Heart left ventricle (tissue), 16 donors: ENCODE measurements at regions of chr10 and their contacts with region 1.

Region 1: DNA sequence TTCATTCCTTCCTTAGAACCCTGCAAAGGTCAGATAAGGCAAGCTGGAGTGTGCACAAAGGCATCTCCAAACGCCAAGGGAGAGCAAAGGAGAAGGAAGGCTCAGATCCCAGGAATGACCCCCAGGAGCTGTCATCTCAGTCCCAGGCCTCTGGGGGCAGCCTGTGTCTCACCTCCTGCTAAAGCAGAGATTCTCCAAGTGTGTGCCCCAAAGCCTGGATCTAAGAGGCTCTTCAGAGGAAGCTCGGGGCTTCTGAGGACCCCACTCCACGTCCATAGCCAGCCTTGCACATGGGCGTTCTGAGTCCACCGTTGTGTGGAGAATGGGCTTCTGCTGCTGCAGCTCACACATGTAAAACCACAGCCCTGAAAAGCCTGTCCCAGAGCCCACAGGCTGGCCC is 5.1 kb upstream of the GRID1 start:
- DNase-seq: no peak
- ATAC-seq: no peak
- H3K4me3 ChIP-seq: no peak overlapping the region
- H3K27ac ChIP-seq: no peak overlapping the region
- H3K4me1 ChIP-seq: peaks cover 0 to 13% (median 6%) of the 10 kb centered on the region in 12 donors
- H3K27me3 ChIP-seq: peaks cover 7 to 65% (median 16%) of the 10 kb centered on the region in 9 donors
- CTCF ChIP-seq: no peak
- POLR2A ChIP-seq: no peak

Region 2: DNA sequence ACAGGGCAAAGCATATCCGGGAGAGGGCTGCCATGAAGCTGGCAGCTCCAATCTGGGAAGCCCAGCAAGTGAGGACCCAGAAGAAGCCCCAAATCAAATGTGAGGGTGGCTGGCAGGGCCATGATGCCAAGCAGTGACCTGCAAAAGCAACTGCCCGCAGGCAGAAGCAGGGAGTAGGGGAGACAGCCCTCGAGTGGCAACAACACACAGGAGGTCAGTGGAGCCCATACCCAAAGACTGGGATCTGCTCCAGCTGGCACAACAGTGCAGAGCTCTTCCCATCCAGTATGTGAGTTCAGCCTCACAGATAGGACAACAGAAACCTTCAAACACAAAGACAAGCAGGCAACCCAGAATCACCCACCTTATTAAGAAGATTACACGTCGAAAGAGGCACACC is 50.1 kb before region 1 on chr10:
- intact Hi-C with region 1: loop called in 1 of 10 experiments (anchors 5 kb)
- DNase-seq: peak in 2 of 5 donors; percentile 33 to 62
- ATAC-seq: peak in 3 of 4 donors; percentile 63 to 81 (median 76)
- H3K4me3 ChIP-seq: no peak overlapping the region
- H3K27ac ChIP-seq: no peak overlapping the region
- H3K4me1 ChIP-seq: peaks cover 0 to 4% (median 0%) of the 10 kb centered on the region in 12 donors
- H3K27me3 ChIP-seq: peaks cover 0 to 8% (median 0%) of the 10 kb centered on the region in 9 donors
- CTCF ChIP-seq: no peak
- POLR2A ChIP-seq: no peak

Region 3: GRCh38 chr10:86613905-86614304 is 242.2 kb after region 1 on chr10:
- intact Hi-C with region 1: no loop called
- DNase-seq: no peak
- ATAC-seq: no peak
- H3K4me3 ChIP-seq: no peak overlapping the region
- H3K27ac ChIP-seq: no peak overlapping the region
- H3K4me1 ChIP-seq: no peaks in the 10 kb centered on the region
- H3K27me3 ChIP-seq: no peaks in the 10 kb centered on the region
- CTCF ChIP-seq: no peak
- POLR2A ChIP-seq: no peak